ENCODE measurements at regions of chr5 and their contacts with region 1.

Region 1: DNA sequence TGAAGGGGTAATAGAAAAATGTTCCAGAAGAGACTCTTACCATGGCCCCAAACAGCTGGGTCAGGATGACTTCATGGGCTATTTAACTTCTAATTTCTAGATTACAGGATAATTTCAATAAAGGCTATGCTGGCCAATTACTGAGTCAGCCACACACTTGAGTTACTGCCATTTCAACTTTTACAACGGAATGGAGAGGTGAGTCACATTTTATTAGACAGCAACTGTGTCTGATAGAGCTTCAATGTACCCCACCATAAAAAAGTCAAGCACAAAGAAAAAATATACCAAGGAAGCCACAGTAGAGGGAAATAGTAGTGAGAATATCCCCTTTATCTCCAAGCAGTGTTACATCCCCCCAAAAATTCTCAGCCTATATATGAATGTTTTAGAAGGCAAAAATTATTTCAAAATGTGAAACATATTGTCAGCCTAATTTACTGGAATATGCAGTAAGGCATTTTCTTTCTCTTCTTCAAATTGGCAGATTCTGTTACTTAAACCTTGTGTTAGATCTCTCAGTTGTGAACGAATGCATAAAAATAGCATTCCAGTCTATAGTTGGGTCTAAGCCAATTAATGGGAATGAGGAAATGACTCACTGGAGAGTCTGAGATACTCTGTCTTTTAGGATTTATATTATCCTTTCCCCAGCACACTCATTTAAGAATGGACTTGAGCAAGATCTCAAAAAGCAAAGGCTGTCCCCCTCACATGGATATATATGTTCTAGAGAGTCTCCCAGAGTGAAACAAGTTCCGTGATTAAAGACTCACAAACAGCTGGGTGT is 47.1 kb upstream of the RAI14 start:
- DNase-seq: no peak
- H3K4me3 ChIP-seq: no peak overlapping the region
- H3K27ac ChIP-seq: no peak overlapping the region
- H3K4me1 ChIP-seq: peaks cover 8% of the 10 kb centered on the region
- CTCF ChIP-seq: no peak

Region 2: GRCh38 chr5:34447424-34447823 is 161.6 kb before region 1 on chr5:
- CTCF ChIA-PET with region 1: no interaction called
- POLR2A ChIA-PET with region 1: no interaction called
- intact Hi-C with region 1: no loop called
- DNase-seq: no peak
- H3K4me3 ChIP-seq: no peak overlapping the region
- H3K27ac ChIP-seq: no peak overlapping the region
- H3K4me1 ChIP-seq: no peaks in the 10 kb centered on the region
- CTCF ChIP-seq: no peak

Region 3: GRCh38 chr5:34459908-34460307 is 149.1 kb before region 1 on chr5:
- CTCF ChIA-PET with region 1: no interaction called
- POLR2A ChIA-PET with region 1: no interaction called
- intact Hi-C with region 1: no loop called
- DNase-seq: peak; percentile 37
- H3K4me3 ChIP-seq: no peak overlapping the region
- H3K27ac ChIP-seq: no peak overlapping the region
- H3K4me1 ChIP-seq: no peaks in the 10 kb centered on the region
- CTCF ChIP-seq: no peak

Region 4: DNA sequence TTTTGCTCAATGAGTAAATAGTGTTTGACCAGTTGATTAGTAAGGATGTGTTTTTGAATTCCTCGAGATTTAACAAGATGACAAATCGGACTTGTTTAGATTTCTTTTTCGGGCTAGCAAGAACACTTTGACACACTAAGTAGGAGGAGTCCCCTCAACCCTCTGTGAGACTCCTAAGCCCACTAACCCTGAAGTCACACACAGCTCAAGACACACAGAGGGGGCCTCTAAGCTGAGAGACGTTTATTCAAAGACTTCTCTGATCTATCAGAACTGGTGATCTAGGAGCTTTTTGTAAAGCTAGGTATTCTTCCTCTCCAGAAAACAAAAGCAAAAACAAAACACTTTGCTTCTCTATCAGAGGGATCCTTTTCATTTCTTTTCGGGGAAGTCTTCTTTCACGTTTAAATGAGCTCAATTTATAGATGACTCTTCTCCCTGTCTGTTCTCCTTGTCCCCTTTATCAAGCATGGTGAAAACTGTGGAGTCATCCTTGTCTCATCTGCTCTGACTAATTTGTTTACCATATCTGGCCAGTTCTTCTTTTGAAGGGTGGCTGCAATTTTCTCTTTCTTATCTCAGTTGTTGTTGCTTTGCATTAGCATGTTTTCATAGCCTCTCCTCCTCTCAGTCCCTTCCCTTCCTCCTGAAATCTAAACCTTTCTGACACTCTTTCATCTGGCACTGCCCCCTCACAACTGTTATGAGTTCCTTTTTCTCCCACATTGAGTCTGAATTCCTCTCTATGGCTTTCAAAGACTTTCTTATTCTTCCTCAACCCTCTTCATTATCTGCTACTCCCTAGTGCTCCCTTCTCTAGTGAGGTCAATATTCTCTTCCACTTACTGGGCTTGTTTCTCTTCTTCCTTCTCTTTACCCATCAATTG is 21.5 kb before region 1 on chr5:
- CTCF ChIA-PET with region 1: no interaction called
- POLR2A ChIA-PET with region 1: interaction called, 10 read pairs
- intact Hi-C with region 1: no loop called
- DNase-seq: no peak
- H3K4me3 ChIP-seq: no peak overlapping the region
- H3K27ac ChIP-seq: no peak overlapping the region
- H3K4me1 ChIP-seq: no peaks in the 10 kb centered on the region
- CTCF ChIP-seq: no peak

Region 5: DNA sequence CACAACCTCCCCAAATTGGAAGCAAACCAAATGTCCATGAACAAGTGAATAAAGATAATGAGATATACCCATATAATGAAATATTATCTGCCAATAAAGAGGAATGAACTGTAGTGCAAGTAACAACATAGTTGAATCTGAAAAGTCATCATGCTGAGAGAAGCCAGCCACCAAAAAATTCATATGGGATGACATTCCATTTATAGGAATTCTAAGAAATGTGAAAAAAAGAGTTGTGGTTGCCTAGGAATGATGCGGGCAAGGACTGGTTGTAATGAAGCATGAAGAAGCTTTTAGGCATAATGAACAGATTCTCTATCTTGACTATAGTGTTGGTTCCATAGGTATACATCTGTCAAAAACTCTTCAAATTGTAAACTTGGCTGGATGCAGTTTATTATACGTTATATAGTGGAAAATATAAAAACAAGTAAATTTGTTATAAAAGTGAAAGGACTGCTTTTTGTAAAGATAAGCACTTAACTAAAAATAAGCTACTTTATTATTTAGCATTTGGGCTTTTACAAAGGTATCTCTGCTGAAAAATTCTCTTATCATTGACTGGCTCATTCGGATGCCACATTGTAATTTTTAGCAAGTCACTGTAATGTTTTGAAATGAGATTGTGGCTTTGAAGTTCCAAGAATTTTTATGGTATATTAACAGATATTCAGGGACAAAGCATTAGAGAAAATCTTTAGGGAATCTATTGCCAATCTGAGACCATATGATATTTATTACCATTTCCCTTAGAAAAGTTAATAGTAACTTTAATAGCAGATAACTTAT is 208.7 kb after region 1 on chr5:
- CTCF ChIA-PET with region 1: no interaction called
- POLR2A ChIA-PET with region 1: no interaction called
- intact Hi-C with region 1: no loop called
- DNase-seq: no peak
- H3K4me3 ChIP-seq: no peak overlapping the region
- H3K27ac ChIP-seq: no peak overlapping the region
- H3K4me1 ChIP-seq: no peaks in the 10 kb centered on the region
- CTCF ChIP-seq: no peak

Measured in OCI-LY7 (cell line).